ENCODE measurements at regions of chr5 and their contacts with region 1.

Region 1: DNA sequence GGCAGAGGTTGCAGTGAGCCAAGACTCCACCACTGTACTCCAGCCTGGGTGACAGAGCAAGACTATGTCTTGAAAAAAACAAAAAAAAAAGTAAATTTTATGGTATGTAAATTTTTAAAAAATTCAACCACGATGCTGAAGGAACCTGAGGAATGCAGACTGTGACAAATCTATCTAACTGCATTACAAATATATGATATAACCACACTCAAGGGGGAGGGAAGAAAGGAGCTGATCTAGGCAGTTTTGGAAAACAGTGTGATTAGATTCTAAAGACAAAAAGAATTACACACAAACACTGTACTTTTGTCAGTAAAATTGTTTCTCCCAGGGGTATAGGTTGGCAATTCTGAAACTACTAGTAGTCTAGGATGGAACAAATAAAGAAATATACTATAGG is 17.0 kb downstream of the LARS1 start:
- DNase-seq: no peak
- ATAC-seq: no peak
- H3K4me3 ChIP-seq: no peak overlapping the region
- H3K27ac ChIP-seq: no peak overlapping the region
- H3K4me1 ChIP-seq: no peaks in the 10 kb centered on the region
- H3K27me3 ChIP-seq: no peaks in the 10 kb centered on the region
- CTCF ChIP-seq: no peak
- EP300 ChIP-seq: no peak
- POLR2A ChIP-seq: no peak
- RAD21 ChIP-seq: no peak

Region 2: GRCh38 chr5:146091881-146092280 is 73.6 kb before region 1 on chr5:
- CTCF ChIA-PET with region 1: no interaction called
- POLR2A ChIA-PET with region 1: no interaction called
- in situ Hi-C with region 1: no loop called
- intact Hi-C with region 1: no loop called
- DNase-seq: no peak
- ATAC-seq: no peak
- H3K4me3 ChIP-seq: no peak overlapping the region
- H3K27ac ChIP-seq: no peak overlapping the region
- H3K4me1 ChIP-seq: no peaks in the 10 kb centered on the region
- H3K27me3 ChIP-seq: peaks cover 0 to 2% of the 10 kb centered on the region in 2 experiments; a peak in 2 of 5 replicates
- CTCF ChIP-seq: no peak
- EP300 ChIP-seq: no peak
- POLR2A ChIP-seq: no peak
- RAD21 ChIP-seq: no peak

Region 3: DNA sequence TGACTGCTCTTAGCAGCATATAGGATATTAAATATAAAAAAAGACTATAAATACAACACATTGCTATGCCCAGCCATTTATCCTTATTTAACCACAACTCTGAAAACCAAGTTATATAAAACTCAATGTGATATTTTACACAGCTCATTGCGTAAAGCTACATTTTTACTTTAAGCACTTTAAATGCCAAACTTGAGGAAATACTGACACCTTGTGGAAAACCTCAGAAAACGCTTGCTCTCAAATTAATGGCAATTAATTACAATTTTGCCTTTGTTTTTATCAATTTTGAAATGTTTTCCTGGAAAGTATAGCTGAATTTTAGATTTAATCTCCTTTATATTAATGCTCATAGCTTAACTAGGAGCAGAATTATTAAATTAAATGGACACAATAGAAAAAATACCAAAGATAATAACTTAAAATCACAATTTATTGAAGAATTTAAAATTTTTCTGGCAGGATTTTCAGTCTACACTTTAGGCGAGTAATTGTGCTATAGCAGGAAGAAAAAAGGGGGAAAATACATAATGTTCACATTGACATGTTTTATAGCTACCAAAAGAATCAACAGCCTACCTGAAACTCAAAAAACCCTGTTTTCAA is 34.9 kb before region 1 on chr5:
- CTCF ChIA-PET with region 1: no interaction called
- POLR2A ChIA-PET with region 1: interaction called, 3 read pairs
- in situ Hi-C with region 1: no loop called
- intact Hi-C with region 1: loop called (anchors 5 kb)
- DNase-seq: peak in 1 of 4 experiments; percentile 21
- ATAC-seq: peak; percentile 50; the same call in 2 of the 3 replicates
- H3K4me3 ChIP-seq: no peak overlapping the region
- H3K27ac ChIP-seq: no peak overlapping the region
- H3K4me1 ChIP-seq: no peaks in the 10 kb centered on the region
- H3K27me3 ChIP-seq: no peaks in the 10 kb centered on the region
- CTCF ChIP-seq: peak in 2 of 3 experiments; percentile 35 to 63; a peak in 4 of 6 replicates
- EP300 ChIP-seq: no peak
- POLR2A ChIP-seq: no peak
- RAD21 ChIP-seq: peak; percentile 58 to 72; a peak in 3 of 4 replicates

Region 4: DNA sequence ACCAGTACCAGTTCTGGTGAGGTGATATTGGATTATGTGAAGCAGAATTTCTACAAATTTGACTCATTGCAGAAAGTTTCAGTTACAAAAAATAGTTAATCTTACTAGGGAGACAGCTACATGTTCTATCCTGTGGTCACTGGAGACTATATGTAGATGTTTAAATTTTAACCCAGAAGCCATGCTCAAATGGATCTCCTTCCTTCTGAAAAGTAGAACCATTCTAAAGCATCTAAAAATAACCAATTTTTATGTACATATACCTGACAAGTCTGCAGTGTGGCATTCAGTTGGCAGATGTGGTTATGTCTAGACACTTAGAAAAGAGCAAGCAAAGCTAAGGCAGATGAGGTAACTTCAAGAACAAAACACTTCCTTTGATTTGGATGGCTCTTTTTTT is 107.6 kb after region 1 on chr5:
- CTCF ChIA-PET with region 1: no interaction called
- POLR2A ChIA-PET with region 1: no interaction called
- in situ Hi-C with region 1: no loop called
- intact Hi-C with region 1: loop called (anchors 10 kb)
- DNase-seq: no peak
- ATAC-seq: no peak; the same call in 1 of the 3 replicates
- H3K4me3 ChIP-seq: no peak overlapping the region
- H3K27ac ChIP-seq: no peak overlapping the region
- H3K4me1 ChIP-seq: no peaks in the 10 kb centered on the region
- H3K27me3 ChIP-seq: no peaks in the 10 kb centered on the region
- CTCF ChIP-seq: no peak
- EP300 ChIP-seq: no peak
- POLR2A ChIP-seq: no peak
- RAD21 ChIP-seq: no peak

Region 5: DNA sequence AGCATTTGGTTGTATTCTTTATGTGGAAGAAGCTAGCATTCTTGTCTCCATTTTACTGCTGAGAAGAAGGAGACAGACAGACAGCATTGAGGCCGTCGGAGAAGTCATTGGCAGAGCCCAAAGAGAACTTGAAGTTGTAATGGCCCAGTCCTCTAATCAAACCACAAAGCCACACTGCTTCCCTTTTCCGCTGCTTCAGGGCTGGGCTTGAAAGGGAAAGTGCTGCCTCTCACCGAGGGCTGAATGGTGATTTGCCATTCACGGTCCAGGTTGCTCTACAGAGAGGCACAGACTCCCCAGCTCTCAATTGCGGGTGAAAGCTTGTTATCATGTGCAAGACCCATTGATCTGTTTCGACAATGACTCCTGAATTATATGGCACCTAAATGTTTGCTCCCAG is 147.6 kb after region 1 on chr5:
- CTCF ChIA-PET with region 1: no interaction called
- POLR2A ChIA-PET with region 1: no interaction called
- in situ Hi-C with region 1: no loop called
- intact Hi-C with region 1: no loop called
- DNase-seq: no peak
- ATAC-seq: peak; percentile 52; the same call in 2 of the 3 replicates
- H3K4me3 ChIP-seq: no peak overlapping the region
- H3K27ac ChIP-seq: no peak overlapping the region
- H3K4me1 ChIP-seq: no peaks in the 10 kb centered on the region
- H3K27me3 ChIP-seq: peaks cover 35 to 60% of the 10 kb centered on the region in 2 experiments
- CTCF ChIP-seq: no peak
- EP300 ChIP-seq: no peak
- POLR2A ChIP-seq: no peak
- RAD21 ChIP-seq: no peak

Measured in K562 (cell line).